Activated CD8-positive, alpha-beta T cell treated with anti-CD3 and anti-CD28 coated beads, Interleukin-2, amount 10 ng/mL, durations not matched to agents 7 days and 5 days (primary cell): ENCODE measurements at regions of chr10 and their contacts with region 1.

Region 1: DNA sequence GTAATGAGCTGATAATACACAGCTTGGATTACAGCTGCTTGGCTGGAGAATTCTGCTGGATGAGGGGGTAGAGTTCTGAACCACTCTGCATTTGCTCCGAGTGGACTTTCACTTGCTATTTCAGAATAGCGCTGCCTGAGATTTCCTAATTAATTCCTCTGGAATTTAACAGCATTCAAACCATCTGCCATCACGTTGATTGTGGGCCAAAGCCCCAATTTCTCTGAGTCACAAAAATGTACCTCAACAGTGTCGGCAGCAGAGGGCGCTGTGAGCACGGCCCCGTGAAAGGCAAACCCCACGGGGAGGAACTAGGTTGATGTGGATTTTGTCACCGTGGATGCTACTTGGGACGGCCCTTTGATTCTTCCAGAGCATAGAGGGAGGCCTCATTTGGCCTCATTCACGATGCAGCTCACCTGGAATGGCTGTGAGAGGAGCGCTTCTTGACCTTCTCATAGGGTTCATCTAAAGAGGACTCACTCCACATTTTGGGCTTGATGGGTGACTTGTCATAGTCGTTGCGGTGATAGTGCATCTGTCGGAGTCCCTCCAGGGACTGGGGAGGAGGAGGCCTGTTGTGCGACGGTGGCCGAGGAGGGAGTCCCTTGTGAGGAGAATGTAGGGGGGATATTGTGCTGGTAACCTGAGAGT is 73.3 kb downstream of the PRPF18 start:
- DNase-seq: peak; percentile 75
- ATAC-seq: peak; percentile 62
- H3K4me3 Mint-ChIP-seq: peak overlapping the region; percentile 25
- H3K27ac Mint-ChIP-seq: peak overlapping the region; percentile 22
- H3K4me1 Mint-ChIP-seq: peaks cover 28% of the 10 kb centered on the region
- H3K27me3 Mint-ChIP-seq: peaks cover 2% of the 10 kb centered on the region

Region 2: DNA sequence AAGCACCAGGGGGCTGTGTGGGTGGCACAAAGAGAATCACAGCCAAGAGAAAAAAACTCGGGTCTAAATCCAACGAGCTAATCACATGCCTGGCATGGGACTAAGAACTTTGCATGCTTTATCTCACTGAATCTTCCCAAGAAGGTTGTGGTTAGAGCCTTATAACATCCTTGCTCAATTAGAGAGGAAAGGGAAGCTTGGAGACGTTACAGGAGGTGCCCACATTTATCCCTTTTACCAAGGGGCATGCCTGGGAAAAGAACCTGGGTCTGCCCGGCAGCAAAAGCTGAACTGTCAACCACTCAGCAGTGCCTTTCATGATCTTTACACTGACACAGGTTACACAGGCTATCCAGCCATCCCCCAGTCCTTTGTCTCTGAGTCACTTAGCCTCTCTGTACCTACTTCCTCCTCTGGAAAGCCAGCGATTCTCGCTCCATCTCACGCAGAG is 116.9 kb after region 1 on chr10:
- CTCF ChIA-PET with region 1: interaction called, 17 read pairs
- POLR2A ChIA-PET with region 1: no interaction called
- DNase-seq: no peak
- ATAC-seq: no peak
- H3K4me3 Mint-ChIP-seq: no peak overlapping the region
- H3K27ac Mint-ChIP-seq: no peak overlapping the region
- H3K4me1 Mint-ChIP-seq: no peaks in the 10 kb centered on the region
- H3K27me3 Mint-ChIP-seq: peaks cover 18% of the 10 kb centered on the region

Region 3: GRCh38 chr10:13787015-13787421 is 127.0 kb after region 1 on chr10:
- CTCF ChIA-PET with region 1: interaction called, 10 read pairs
- POLR2A ChIA-PET with region 1: no interaction called
- DNase-seq: peak; percentile 82
- ATAC-seq: peak; percentile 91
- H3K4me3 Mint-ChIP-seq: peak overlapping the region; percentile 70
- H3K27ac Mint-ChIP-seq: peak overlapping the region; percentile 95
- H3K4me1 Mint-ChIP-seq: peaks cover 14% of the 10 kb centered on the region
- H3K27me3 Mint-ChIP-seq: no peaks in the 10 kb centered on the region